ENCODE measurements at regions of chr19 and their contacts with region 1.

Region 1: DNA sequence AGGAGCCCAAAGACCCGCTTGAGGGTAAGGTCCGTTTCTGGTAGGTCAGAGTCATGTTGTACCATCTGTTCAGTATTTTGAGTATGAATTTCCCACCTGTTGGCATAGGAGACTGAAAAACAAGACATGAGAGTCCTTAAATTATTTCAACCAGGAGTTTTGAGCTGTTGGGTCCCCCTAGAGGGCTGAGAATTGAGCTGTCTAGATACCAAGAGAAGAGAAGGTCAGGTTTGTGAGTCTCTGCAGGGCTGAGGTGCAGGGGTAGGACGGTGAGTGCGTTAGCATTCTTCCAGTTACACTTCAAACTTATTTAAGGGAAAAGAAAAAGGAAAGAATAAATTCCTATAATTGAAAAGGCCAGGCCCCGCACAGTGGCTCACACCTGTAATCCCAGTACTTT is 5.0 kb downstream of the CBLC start:
- DNase-seq: no peak
- H3K4me3 ChIP-seq: no peak overlapping the region
- H3K27ac ChIP-seq: no peak overlapping the region
- H3K27me3 ChIP-seq: no peaks in the 10 kb centered on the region
- CTCF ChIP-seq: 0 out of 2 replicates have a peak, but pooled peaks have one; percentile 7

Region 2: GRCh38 chr19:44042147-44042546 is 740.6 kb before region 1 on chr19:
- CTCF ChIA-PET with region 1: no interaction called
- POLR2A ChIA-PET with region 1: no interaction called
- DNase-seq: no peak
- H3K4me3 ChIP-seq: no peak overlapping the region
- H3K27ac ChIP-seq: no peak overlapping the region
- H3K27me3 ChIP-seq: no peaks in the 10 kb centered on the region
- CTCF ChIP-seq: no peak

Region 3: DNA sequence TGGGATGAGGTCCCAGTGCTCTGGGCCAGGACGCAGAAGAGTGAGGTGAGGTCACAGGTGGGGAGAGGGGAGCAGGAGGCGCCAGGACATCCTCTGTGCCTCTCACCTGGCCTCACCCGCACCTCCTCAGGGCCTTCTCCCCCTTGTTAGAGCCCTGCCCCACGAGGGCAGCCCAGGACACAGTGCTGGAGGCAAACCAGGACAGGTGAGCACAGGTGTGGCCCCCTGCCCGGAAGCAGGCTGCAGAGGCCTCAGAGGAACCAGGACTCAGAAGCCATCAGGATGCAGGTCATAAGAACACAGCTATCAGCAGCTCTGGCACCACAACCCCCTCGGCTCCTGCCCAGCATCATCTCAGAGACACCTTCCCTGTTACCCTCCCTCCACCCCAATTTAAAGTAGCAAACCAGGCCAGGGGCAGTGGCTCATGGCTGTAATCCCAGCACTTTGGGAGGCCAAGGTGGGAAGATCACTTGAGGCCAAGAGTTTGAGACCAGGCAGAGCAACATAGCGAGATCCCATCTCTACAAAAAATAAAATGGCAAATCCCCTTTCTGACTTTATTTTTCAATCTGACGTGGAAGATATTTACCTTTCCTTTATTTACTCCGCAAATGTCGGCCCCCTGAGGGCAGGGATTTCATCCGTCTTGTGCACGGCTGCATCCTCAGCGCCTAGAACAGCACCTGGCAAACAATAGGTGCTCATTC is 84.1 kb before region 1 on chr19 and contains the start of gene CEACAM16:
- CTCF ChIA-PET with region 1: no interaction called
- POLR2A ChIA-PET with region 1: no interaction called
- DNase-seq: no peak
- H3K4me3 ChIP-seq: no peak within 1 kb of the TSS
- H3K27ac ChIP-seq: no peak within 1 kb of the TSS
- H3K27me3 ChIP-seq: no peaks in the 10 kb centered on the region
- CTCF ChIP-seq: no peak
- polyA plus RNA-seq, gene CEACAM16: not detected in 2 replicates

Region 4: GRCh38 chr19:44824761-44825160 is 42.0 kb after region 1 on chr19:
- CTCF ChIA-PET with region 1: interaction called, 10 read pairs
- POLR2A ChIA-PET with region 1: no interaction called
- DNase-seq: no peak
- H3K4me3 ChIP-seq: no peak overlapping the region
- H3K27ac ChIP-seq: no peak overlapping the region
- H3K27me3 ChIP-seq: peaks cover 7% of the 10 kb centered on the region
- CTCF ChIP-seq: no peak

Region 5: DNA sequence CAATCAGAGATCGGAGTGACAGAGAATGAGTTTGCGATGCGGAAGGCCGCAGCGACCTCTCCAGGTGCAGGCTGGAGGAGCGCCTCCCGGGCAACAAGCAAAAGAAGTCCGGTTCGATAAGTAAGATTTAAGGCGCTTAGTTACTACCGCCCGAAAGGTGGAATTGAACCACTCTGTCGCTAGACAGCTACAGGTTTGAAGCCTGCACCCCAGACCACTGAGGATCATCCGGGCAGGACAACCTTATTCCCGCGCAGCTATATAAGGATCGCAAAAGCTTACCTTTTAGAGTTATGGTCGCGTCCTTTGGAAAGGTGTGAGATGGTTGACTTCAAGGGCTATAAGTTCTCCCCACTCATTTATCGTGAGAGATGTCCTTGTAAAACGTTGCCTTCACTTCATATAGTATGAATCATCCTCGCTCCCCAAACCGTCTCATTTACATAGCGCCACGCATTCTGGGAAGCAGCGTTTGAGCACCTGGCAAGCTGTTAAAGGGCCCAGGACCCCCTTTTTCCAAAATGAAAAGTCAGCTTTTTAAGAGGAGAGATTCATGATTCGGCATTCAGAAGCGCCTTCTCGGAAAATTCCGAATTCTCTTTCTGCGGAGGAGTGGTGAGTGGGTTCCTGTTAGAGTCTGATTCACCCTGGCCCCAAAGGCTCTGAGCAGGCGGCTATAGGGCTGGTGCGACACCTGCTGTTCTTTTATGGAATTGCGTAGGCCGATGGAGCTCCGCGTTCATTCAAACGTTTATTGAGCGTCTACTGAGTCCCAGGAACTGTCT is 695.9 kb after region 1 on chr19:
- CTCF ChIA-PET with region 1: no interaction called
- POLR2A ChIA-PET with region 1: no interaction called
- DNase-seq: peak; percentile 86
- H3K4me3 ChIP-seq: peak overlapping the region; percentile 65
- H3K27ac ChIP-seq: peak overlapping the region; percentile 96
- H3K27me3 ChIP-seq: no peaks in the 10 kb centered on the region
- CTCF ChIP-seq: peak; percentile 95